Caco-2 (cell line): ENCODE measurements at regions of chr3 and their contacts with region 1.

Region 1: DNA sequence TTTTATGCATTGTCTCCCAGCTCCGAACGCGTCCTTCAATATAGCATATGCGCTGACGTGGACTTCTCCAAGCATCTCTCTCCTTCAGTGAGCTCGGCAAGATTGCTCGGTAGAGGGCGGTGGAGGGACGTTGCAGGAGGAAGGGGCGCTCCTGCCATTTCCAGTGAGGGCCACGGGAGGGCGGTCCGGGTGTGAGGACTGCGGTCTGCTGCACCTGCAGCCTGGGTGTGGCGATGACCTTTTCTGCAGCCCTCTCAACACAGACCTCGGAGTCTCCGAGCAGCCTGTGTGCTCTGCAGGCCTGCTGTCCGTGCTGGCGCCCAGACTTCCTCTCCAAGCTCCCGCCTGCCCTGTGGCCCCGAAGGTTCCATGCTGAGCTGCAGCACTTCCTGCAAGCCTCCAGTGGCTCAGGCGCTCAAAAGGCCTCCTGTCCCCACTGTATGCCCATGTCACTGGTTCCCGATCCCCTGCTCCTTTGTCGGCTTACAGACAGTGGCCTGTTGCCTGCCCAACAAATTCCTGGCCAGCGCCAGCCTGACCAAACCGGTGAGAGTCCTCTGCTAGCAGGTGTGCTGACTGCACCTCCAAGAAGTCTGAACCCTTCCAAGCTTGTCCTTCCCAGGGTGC is 8.9 kb upstream of the RTP3 start:
- DNase-seq: peak; percentile 92 to 95
- H3K4me3 ChIP-seq: no peak overlapping the region
- H3K4me3 Mint-ChIP-seq: peak overlapping the region; percentile 63
- H3K27ac Mint-ChIP-seq: no peak overlapping the region
- H3K4me1 ChIP-seq: peaks cover 21% of the 10 kb centered on the region
- H3K4me1 Mint-ChIP-seq: peaks cover 12% of the 10 kb centered on the region
- H3K27me3 ChIP-seq: no peaks in the 10 kb centered on the region
- H3K27me3 Mint-ChIP-seq: no peaks in the 10 kb centered on the region
- CTCF ChIP-seq: peak; percentile 98 to 100

Region 2: GRCh38 chr3:46427916-46428833 is 60.7 kb before region 1 on chr3:
- CTCF ChIA-PET with region 1: interaction called, 11 read pairs
- POLR2A ChIA-PET with region 1: no interaction called
- intact Hi-C with region 1: loop called (anchors 1 kb)
- DNase-seq: peak; percentile 25 to 45
- H3K4me3 ChIP-seq: no peak overlapping the region
- H3K4me3 Mint-ChIP-seq: no peak overlapping the region
- H3K27ac Mint-ChIP-seq: no peak overlapping the region
- H3K4me1 ChIP-seq: peaks cover 31% of the 10 kb centered on the region
- H3K4me1 Mint-ChIP-seq: peaks cover 21% of the 10 kb centered on the region
- H3K27me3 ChIP-seq: no peaks in the 10 kb centered on the region
- H3K27me3 Mint-ChIP-seq: no peaks in the 10 kb centered on the region
- CTCF ChIP-seq: peak in 1 of 2 experiments; percentile 11

Region 3: DNA sequence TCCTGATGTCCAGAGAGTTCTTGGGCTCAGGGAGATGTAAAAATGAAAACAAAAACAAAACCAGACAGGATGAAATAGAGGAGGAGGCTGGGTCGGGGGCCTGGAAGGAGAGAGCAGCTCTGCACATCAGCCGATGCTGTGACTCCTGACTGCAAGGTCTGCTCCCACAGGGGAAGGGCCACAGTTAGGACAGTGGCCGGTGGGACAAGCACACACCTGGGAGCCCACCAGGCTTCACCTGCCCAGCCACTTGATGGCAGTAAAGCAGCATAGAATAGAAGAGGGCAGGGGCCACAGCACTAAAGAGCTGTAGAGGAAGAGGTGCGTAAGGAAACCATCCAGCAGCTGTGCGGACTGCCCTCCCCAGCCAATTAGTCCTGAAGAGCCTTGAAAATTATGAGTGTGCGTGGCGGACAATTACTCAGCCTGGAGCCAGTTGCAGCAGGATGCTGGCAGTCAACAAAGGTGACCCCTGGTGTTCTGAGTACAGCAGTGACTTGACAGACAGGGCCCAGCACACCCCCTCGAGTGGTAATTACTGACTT is 174.8 kb after region 1 on chr3:
- CTCF ChIA-PET with region 1: no interaction called
- POLR2A ChIA-PET with region 1: no interaction called
- intact Hi-C with region 1: loop called (anchors 2 kb)
- DNase-seq: peak in 1 of 2 experiments; percentile 32
- H3K4me3 ChIP-seq: no peak overlapping the region
- H3K4me3 Mint-ChIP-seq: no peak overlapping the region
- H3K27ac Mint-ChIP-seq: no peak overlapping the region
- H3K4me1 ChIP-seq: peaks cover 4% of the 10 kb centered on the region; the same call in 1 of the 2 replicates
- H3K4me1 Mint-ChIP-seq: peaks cover 9% of the 10 kb centered on the region
- H3K27me3 ChIP-seq: no peaks in the 10 kb centered on the region
- H3K27me3 Mint-ChIP-seq: no peaks in the 10 kb centered on the region
- CTCF ChIP-seq: peak; percentile 14 to 26

Region 4: DNA sequence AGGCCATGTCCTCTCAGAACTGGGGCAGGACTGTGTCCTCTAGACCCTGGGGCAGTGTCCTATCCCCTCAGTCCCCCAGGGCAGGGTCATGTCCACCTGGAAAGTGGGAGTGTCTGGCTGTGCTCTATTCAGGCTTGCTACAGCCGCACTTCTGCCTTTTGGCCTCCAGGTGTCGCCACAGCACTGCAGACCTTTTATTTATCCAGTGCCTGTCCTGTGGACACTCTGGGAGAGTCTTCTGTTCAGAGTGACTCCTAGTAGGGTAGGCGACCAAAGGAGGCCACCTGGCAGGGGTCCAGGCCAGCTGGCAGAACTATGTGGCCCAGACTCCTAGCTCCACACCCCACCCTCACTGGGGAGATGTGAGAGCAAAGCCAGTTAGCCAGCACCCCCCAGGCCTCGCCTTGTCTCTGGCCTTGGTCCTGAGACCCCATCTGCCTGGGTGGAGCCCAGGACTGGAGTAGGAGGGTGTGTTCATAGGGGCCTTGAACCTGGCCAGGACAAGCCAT is 216.2 kb after region 1 on chr3:
- CTCF ChIA-PET with region 1: no interaction called
- POLR2A ChIA-PET with region 1: no interaction called
- intact Hi-C with region 1: loop called (anchors 5 kb)
- DNase-seq: peak; percentile 78 to 79
- H3K4me3 ChIP-seq: no peak overlapping the region
- H3K4me3 Mint-ChIP-seq: no peak overlapping the region
- H3K27ac Mint-ChIP-seq: no peak overlapping the region
- H3K4me1 ChIP-seq: no peaks in the 10 kb centered on the region
- H3K4me1 Mint-ChIP-seq: no peaks in the 10 kb centered on the region
- H3K27me3 ChIP-seq: no peaks in the 10 kb centered on the region; the same call in 1 of the 2 replicates
- H3K27me3 Mint-ChIP-seq: peaks cover 6% of the 10 kb centered on the region
- CTCF ChIP-seq: peak; percentile 91 to 95

Region 5: DNA sequence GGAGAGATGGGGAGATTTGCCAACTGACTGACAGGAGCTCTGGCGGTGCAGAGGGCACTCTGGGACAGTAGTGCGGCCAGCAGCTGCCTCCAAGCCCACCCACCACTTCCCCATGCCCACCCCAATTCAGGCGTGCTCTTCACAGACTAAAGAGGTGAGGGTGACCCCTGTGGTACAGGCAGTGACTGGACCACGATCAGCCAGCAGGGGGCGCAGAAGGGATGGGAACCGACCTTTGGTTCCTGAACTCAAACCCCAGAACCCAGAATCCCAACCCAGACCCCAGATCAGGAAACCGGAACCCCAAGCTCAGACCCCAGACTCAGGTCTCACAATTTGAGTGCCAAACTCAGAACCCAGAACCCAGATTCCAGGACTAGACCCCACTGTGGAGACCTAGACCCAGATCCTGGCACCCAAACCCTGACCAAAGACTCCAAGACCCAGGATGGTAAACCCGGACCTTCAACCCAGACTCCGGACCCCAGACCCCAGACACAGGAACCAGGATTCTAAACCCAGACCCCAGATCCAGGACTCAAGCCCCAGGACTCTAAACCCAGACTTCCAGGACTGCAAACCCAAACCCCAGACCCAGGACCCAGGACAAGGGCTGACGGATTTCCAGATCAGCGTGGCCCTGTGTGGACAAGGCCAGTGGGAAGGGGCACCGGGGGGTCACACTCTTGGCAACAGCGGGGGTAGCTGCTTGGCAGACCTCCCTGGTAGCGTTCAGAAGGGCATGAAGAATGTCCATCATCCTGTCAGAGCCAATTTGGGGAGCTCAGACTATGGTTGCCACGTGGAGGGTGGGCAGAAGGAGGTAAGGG is 378.1 kb after region 1 on chr3:
- CTCF ChIA-PET with region 1: no interaction called
- POLR2A ChIA-PET with region 1: no interaction called
- intact Hi-C with region 1: no loop called
- DNase-seq: peak; percentile 69 to 80
- H3K4me3 ChIP-seq: no peak overlapping the region
- H3K4me3 Mint-ChIP-seq: no peak overlapping the region
- H3K27ac Mint-ChIP-seq: no peak overlapping the region
- H3K4me1 ChIP-seq: peaks cover 33% of the 10 kb centered on the region
- H3K4me1 Mint-ChIP-seq: peaks cover 22% of the 10 kb centered on the region
- H3K27me3 ChIP-seq: no peaks in the 10 kb centered on the region
- H3K27me3 Mint-ChIP-seq: no peaks in the 10 kb centered on the region
- CTCF ChIP-seq: peak; percentile 80 to 94